Activated CD4-positive, alpha-beta T cell treated with anti-CD3 and anti-CD28 coated beads for 36 hours (primary cell): ENCODE measurements at regions of chr6 and their contacts with region 1.

Region 1: DNA sequence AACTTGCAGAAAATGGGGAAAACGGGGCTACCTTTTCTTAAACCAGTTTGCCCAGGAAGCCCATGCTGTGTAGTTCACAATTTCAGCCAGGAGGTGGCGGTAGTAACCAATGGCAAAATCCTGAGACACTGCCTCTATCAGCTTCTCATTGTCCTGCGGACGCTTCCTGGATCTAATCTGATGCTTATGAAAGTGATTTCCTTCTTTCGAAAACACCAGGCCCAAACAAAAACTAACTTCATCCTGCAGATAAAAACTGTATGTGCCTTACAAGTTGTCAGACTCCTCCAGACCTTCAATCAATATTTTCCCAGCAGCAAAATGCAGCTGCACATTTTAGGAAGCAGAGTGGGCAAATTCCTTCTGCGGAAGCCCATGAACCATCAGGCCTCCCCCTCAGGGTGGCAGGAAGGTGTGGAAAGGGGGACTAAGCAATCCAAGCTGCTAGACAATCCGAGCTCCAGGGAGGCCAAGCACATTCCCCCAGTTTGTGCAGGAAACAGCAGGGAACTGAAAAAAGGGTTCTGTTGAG is 88.5 kb downstream of the LY86 start:
- DNase-seq: peak; percentile 86
- ATAC-seq: peak; percentile 78
- H3K4me3 Mint-ChIP-seq: no peak overlapping the region
- H3K27ac Mint-ChIP-seq: no peak overlapping the region
- H3K4me1 Mint-ChIP-seq: peaks cover 9% of the 10 kb centered on the region
- H3K27me3 Mint-ChIP-seq: no peaks in the 10 kb centered on the region

Region 2: DNA sequence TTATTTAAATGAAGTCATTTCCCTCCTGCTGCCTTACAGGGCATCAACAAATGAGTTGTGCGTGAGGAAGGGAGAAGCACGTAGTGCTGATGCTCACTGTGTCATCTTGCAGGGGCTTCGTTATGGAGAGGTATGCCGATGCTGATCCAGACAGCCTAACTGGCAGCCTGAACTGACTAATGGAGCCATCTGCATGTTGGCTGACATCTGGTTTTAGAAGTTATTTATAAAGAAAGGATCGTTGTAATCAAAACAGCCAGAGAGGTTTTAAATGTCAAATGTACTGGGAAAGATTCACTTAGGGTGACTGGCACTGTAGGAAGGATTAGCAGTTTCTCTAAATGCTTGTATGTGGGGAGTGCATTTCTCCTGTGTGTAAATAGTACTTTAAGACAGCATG is 1361.1 kb before region 1 on chr6:
- CTCF ChIA-PET with region 1: no interaction called
- POLR2A ChIA-PET with region 1: no interaction called
- intact Hi-C with region 1: no loop called
- DNase-seq: no peak
- ATAC-seq: no peak
- H3K4me3 Mint-ChIP-seq: no peak overlapping the region
- H3K27ac Mint-ChIP-seq: no peak overlapping the region
- H3K4me1 Mint-ChIP-seq: peaks cover 19% of the 10 kb centered on the region
- H3K27me3 Mint-ChIP-seq: no peaks in the 10 kb centered on the region

Region 3: GRCh38 chr6:6614096-6614982 is 62.6 kb before region 1 on chr6:
- CTCF ChIA-PET with region 1: no interaction called
- POLR2A ChIA-PET with region 1: no interaction called
- intact Hi-C with region 1: no loop called
- DNase-seq: peak; percentile 57
- ATAC-seq: peak; percentile 27
- H3K4me3 Mint-ChIP-seq: peak overlapping the region; percentile 46
- H3K27ac Mint-ChIP-seq: peak overlapping the region; percentile 74
- H3K4me1 Mint-ChIP-seq: peaks cover 81% of the 10 kb centered on the region
- H3K27me3 Mint-ChIP-seq: no peaks in the 10 kb centered on the region

Region 4: DNA sequence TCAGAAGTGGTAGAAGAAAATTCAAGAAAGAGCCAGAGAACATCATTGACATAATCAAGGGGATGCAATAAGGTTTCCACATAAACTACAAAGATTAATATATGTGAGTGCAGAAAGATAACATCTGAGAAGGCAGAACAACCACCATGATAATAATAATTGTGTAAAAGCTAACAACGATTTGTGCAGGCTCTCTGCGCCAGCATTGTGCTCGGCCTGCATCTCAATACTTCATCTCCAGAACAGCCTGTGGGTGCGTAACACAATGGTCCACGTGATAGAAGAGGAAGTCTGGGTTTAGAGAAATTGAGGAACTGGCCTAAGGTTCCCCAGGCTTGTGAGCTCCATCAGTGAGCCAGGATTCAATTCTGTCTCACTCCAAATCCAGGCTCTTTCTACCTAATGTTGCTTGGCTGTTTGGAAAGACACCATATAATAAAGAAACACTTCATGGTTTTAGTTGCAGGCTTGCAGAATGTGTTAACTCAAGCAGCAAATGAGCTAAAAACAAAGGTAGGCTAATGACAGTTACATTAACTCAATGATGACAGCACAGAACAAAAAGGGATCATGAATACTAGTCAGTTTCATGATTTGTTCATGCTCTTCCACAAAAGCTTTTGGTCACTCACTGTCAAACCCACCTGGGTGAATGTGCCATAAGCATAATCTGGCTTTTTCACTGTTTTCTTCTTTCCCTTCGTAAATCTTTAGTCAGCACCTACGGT is 17.2 kb before region 1 on chr6:
- CTCF ChIA-PET with region 1: interaction called, 20 read pairs
- POLR2A ChIA-PET with region 1: interaction called, 4 read pairs
- intact Hi-C with region 1: no loop called
- DNase-seq: no peak
- ATAC-seq: no peak
- H3K4me3 Mint-ChIP-seq: no peak overlapping the region
- H3K27ac Mint-ChIP-seq: peak overlapping the region; percentile 95
- H3K4me1 Mint-ChIP-seq: peaks cover 72% of the 10 kb centered on the region
- H3K27me3 Mint-ChIP-seq: no peaks in the 10 kb centered on the region

Region 5: GRCh38 chr6:6694825-6695624 is 18.0 kb after region 1 on chr6:
- CTCF ChIA-PET with region 1: interaction called, 18 read pairs
- POLR2A ChIA-PET with region 1: no interaction called
- intact Hi-C with region 1: no loop called
- DNase-seq: no peak
- ATAC-seq: no peak
- H3K4me3 Mint-ChIP-seq: no peak overlapping the region
- H3K27ac Mint-ChIP-seq: no peak overlapping the region
- H3K4me1 Mint-ChIP-seq: peaks cover 1% of the 10 kb centered on the region
- H3K27me3 Mint-ChIP-seq: peaks cover 7% of the 10 kb centered on the region

Region 6: GRCh38 chr6:6788394-6789020 is 111.5 kb after region 1 on chr6:
- CTCF ChIA-PET with region 1: interaction called, 3 read pairs
- POLR2A ChIA-PET with region 1: no interaction called
- intact Hi-C with region 1: loop called (anchors 5 to 10 kb)
- DNase-seq: peak; percentile 53
- ATAC-seq: peak; percentile 89
- H3K4me3 Mint-ChIP-seq: no peak overlapping the region
- H3K27ac Mint-ChIP-seq: no peak overlapping the region
- H3K4me1 Mint-ChIP-seq: peaks cover under 1% of the 10 kb centered on the region
- H3K27me3 Mint-ChIP-seq: no peaks in the 10 kb centered on the region

Region 7: GRCh38 chr6:7238900-7239589 is 562.1 kb after region 1 on chr6:
- CTCF ChIA-PET with region 1: interaction called, 8 read pairs
- POLR2A ChIA-PET with region 1: no interaction called
- intact Hi-C with region 1: loop called (anchors 1 kb)
- DNase-seq: peak; percentile 92
- ATAC-seq: peak; percentile 92
- H3K4me3 Mint-ChIP-seq: no peak overlapping the region
- H3K27ac Mint-ChIP-seq: no peak overlapping the region
- H3K4me1 Mint-ChIP-seq: peaks cover 23% of the 10 kb centered on the region
- H3K27me3 Mint-ChIP-seq: no peaks in the 10 kb centered on the region

Region 8: GRCh38 chr6:7615611-7616383 is 938.8 kb after region 1 on chr6:
- CTCF ChIA-PET with region 1: no interaction called
- POLR2A ChIA-PET with region 1: no interaction called
- intact Hi-C with region 1: loop called in 1 of 2 experiments (anchors 1 kb)
- DNase-seq: peak; percentile 44
- ATAC-seq: peak; percentile 69
- H3K4me3 Mint-ChIP-seq: no peak overlapping the region
- H3K27ac Mint-ChIP-seq: no peak overlapping the region
- H3K4me1 Mint-ChIP-seq: peaks cover 17% of the 10 kb centered on the region
- H3K27me3 Mint-ChIP-seq: no peaks in the 10 kb centered on the region